ENCODE measurements at regions of chr5 and their contacts with region 1.

Region 1: GRCh38 chr5:132490486-132491367 is at the start of gene IRF1:
- DNase-seq: peak; percentile 97 to 99 (median 99)
- ATAC-seq: peak; percentile 93 to 94
- H3K4me3 ChIP-seq: peak within 1 kb of the TSS; percentile 74
- H3K27ac ChIP-seq: peak within 1 kb of the TSS; percentile 98
- H3K4me1 ChIP-seq: peaks cover 14% of the 10 kb centered on the region
- H3K27me3 ChIP-seq: no peaks in the 10 kb centered on the region
- total RNA-seq, gene IRF1: 9.4 to 17.9 (median 13.8) TPM

Region 2: GRCh38 chr5:132180134-132180745 is 310.5 kb before region 1 on chr5:
- intact Hi-C with region 1: loop called in 1 of 4 experiments (anchors 10 kb)
- DNase-seq: no peak
- ATAC-seq: peak; percentile 34 to 53
- H3K4me3 ChIP-seq: no peak overlapping the region
- H3K27ac ChIP-seq: no peak overlapping the region
- H3K4me1 ChIP-seq: no peaks in the 10 kb centered on the region
- H3K27me3 ChIP-seq: no peaks in the 10 kb centered on the region

Region 3: GRCh38 chr5:132293066-132293991 is 197.4 kb before region 1 on chr5:
- intact Hi-C with region 1: no loop called
- DNase-seq: peak; percentile 94 to 96 (median 95)
- ATAC-seq: peak; percentile 78 to 82
- H3K4me3 ChIP-seq: peak overlapping the region; percentile 43
- H3K27ac ChIP-seq: peak overlapping the region; percentile 92
- H3K4me1 ChIP-seq: peaks cover 3% of the 10 kb centered on the region
- H3K27me3 ChIP-seq: no peaks in the 10 kb centered on the region

Region 4: DNA sequence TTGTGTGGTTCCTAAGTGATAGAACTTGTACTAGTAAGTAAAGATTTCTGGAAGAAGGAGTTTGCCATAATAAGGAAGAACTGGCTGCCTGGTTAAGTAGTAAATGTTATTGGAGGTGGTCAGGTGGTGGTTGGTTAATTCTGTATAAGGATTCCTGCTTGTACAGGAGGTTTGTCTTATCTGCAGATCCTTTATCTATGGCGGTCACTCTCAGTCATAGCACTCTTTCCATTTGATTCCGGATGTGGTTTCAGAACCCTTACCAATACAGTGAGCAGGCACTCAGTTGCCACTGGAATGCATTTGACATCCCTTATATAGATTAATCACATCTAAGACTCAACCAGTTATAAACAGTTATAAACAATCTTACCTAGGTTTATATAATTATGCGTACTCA is 116.4 kb after region 1 on chr5:
- intact Hi-C with region 1: no loop called
- DNase-seq: no peak
- ATAC-seq: no peak
- H3K4me3 ChIP-seq: no peak overlapping the region
- H3K27ac ChIP-seq: no peak overlapping the region
- H3K4me1 ChIP-seq: no peaks in the 10 kb centered on the region
- H3K27me3 ChIP-seq: no peaks in the 10 kb centered on the region